Activated CD8-positive, alpha-beta T cell treated with anti-CD3 and anti-CD28 coated beads, Interleukin-2, amount 10 ng/mL, durations not matched to agents 7 days and 5 days (primary cell): ENCODE measurements at regions of chr16 and their contacts with region 1.

Region 1: GRCh38 chr16:70349783-70350182 is 3.1 kb downstream of the DDX19A start:
- DNase-seq: no peak
- ATAC-seq: no peak
- H3K4me3 Mint-ChIP-seq: no peak overlapping the region
- H3K27ac Mint-ChIP-seq: no peak overlapping the region
- H3K4me1 Mint-ChIP-seq: peaks cover 28% of the 10 kb centered on the region
- H3K27me3 Mint-ChIP-seq: no peaks in the 10 kb centered on the region

Region 2: DNA sequence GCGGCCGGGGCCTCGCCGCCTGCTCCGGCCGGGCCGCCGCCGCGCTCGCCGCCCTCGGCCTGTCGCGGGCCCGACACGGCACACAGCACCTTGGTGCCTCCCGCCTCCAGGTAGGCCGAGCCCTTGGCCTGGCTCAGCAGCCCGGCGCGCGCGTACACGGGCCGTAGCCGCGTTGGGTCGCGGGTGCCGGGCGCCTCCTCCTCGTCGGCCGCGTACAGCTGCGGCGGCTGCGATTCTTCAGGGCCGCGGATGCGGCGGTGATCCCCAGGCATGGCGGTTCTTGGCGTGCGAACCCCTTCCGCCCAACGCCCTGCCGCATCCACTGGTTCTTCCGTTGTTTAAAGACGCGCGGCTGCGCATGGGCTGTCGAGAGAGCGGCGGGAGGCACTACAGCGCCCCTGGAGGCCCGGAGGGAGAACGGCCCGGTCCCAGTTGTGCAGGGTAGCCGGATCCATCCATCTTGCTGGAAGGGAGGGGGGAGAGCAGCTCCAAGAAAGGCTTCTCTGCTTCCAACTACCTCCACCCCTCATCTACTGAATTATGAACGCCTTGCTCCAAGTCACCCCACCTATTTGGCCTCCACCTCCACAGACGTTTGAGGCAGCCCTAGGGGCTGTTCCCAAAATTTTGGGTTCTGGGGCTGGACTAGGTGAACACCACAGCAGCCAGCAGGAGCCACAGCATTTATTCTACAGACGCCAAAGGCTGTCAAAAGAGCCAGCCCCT is 98.0 kb before region 1 on chr16 and contains the start of gene EXOSC6:
- CTCF ChIA-PET with region 1: interaction called, 3 read pairs
- POLR2A ChIA-PET with region 1: interaction called, 10 read pairs
- DNase-seq: peak; percentile 96
- ATAC-seq: peak; percentile 91
- H3K4me3 Mint-ChIP-seq: peak within 1 kb of the TSS; percentile 87
- H3K27ac Mint-ChIP-seq: peak within 1 kb of the TSS; percentile 96
- H3K4me1 Mint-ChIP-seq: peaks cover 20% of the 10 kb centered on the region
- H3K27me3 Mint-ChIP-seq: no peaks in the 10 kb centered on the region
- total RNA-seq, gene EXOSC6: 27.6 to 28.5 TPM

Region 3: DNA sequence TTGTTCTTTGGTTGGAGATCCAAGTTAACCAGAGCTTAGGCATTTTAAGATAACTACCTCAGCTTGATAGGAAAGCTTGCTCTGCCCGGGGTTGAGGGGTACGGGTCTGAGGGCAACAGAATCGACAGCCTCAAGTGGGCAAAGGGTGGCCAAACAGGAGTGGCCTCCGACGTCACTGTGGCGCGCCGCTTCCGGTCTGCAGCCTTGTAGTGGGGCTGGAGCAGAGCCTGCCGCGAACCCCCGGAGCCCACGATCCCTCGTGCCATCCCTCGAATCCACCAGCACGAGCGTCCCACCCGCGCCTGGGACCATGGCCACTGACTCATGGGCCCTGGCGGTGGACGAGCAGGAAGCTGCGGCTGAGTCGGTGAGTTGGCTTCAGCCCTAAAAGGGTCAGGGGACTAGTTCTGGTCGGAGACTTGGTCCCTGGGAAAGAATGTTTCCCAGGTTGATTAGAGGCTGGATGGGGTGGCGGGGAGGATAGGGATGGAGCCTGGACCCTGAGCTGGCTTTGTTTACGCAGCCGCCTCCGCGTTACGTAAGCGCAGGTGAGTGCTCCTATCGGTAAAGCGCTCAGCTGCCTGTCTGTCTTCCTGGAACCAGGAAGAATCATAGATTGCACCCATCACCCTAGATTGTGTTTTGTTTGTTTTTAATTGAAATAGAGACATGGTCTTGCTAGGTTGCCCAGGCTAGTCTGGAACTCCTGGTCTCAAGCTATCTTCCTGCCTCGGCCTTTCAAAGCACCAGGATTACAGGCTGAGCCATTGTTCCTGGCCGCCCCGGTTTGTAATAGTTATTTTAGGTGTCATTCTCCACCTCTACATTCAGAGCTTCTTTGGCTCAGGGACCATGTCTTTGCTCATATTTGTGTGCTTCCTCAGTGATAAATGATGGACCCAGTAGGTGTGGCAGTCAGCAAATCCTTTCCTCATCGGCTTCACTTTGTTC is 50.5 kb before region 1 on chr16 and contains the start of gene DDX19B:
- CTCF ChIA-PET with region 1: no interaction called
- POLR2A ChIA-PET with region 1: interaction called, 47 read pairs
- DNase-seq: peak; percentile 79
- ATAC-seq: peak; percentile 89
- H3K4me3 Mint-ChIP-seq: peak within 1 kb of the TSS; percentile 91
- H3K27ac Mint-ChIP-seq: peak within 1 kb of the TSS; percentile 93
- H3K4me1 Mint-ChIP-seq: peaks cover 35% of the 10 kb centered on the region
- H3K27me3 Mint-ChIP-seq: no peaks in the 10 kb centered on the region
- total RNA-seq, gene DDX19B: 28.8 to 32.6 TPM

Region 4: GRCh38 chr16:70337814-70338213 is 12.0 kb before region 1 on chr16:
- CTCF ChIA-PET with region 1: interaction called, 8 read pairs
- POLR2A ChIA-PET with region 1: interaction called, 14 read pairs
- DNase-seq: no peak
- ATAC-seq: no peak
- H3K4me3 Mint-ChIP-seq: no peak overlapping the region
- H3K27ac Mint-ChIP-seq: no peak overlapping the region
- H3K4me1 Mint-ChIP-seq: no peaks in the 10 kb centered on the region
- H3K27me3 Mint-ChIP-seq: no peaks in the 10 kb centered on the region

Region 5: GRCh38 chr16:70380861-70381603 is 31.2 kb after region 1 on chr16:
- CTCF ChIA-PET with region 1: interaction called, 3 read pairs
- POLR2A ChIA-PET with region 1: interaction called, 29 read pairs
- DNase-seq: peak; percentile 99
- ATAC-seq: peak; percentile 95
- H3K4me3 Mint-ChIP-seq: peak overlapping the region; percentile 95
- H3K27ac Mint-ChIP-seq: peak overlapping the region; percentile 98
- H3K4me1 Mint-ChIP-seq: peaks cover 15% of the 10 kb centered on the region
- H3K27me3 Mint-ChIP-seq: no peaks in the 10 kb centered on the region